Endothelial cell of umbilical vein (primary cell): ENCODE measurements at regions of chr5 and their contacts with region 1.

Region 1: DNA sequence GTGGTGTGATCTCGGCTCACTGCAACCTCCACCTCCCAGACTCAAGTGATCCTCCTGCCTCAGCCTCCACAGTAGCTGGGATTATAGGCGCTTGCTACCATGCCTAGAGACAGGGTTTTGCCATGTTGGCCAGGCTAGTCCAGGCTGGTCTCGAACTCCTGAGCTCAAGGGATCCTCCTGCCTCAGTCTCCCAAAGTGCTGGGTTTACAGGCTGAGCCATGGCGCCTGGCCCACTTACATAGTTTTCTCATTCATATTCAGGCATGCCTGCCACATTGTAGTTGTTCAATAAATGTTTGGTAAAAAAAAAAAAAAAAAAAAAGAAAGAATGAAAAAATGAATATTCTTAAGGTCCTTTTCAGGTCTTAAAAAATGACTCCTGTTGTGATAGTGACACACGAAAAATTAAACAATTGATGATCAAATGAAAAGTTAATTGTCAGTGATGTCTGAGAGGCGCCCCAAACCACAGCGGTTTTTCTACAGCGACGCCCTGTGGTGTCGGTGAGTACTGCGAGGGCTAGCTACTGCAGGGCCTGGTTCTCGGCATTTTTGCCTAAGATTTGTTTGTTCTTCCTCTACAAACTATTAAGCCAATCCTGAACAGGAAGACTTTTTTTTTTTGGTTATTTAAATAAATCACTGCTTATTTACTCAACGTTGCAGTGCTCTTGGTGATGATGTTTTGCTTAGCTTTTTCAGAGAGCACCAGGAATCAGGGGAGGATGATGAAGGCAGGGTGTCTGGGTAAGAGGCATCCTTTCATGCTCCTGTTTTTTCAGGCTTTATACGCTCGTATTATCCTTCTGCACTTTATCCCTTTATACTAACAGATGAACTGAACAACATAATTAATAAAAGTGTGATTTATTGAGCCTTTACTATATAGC is 67.0 kb upstream of the DPYSL3 start:
- DNase-seq: peak; percentile 45
- H3K4me3 ChIP-seq: no peak overlapping the region
- H3K27ac ChIP-seq: no peak overlapping the region
- H3K4me1 ChIP-seq: no peaks in the 10 kb centered on the region
- H3K27me3 ChIP-seq: no peaks in the 10 kb centered on the region
- CTCF ChIP-seq: peak; percentile 86 to 92
- POLR2A ChIP-seq: no peak

Region 2: DNA sequence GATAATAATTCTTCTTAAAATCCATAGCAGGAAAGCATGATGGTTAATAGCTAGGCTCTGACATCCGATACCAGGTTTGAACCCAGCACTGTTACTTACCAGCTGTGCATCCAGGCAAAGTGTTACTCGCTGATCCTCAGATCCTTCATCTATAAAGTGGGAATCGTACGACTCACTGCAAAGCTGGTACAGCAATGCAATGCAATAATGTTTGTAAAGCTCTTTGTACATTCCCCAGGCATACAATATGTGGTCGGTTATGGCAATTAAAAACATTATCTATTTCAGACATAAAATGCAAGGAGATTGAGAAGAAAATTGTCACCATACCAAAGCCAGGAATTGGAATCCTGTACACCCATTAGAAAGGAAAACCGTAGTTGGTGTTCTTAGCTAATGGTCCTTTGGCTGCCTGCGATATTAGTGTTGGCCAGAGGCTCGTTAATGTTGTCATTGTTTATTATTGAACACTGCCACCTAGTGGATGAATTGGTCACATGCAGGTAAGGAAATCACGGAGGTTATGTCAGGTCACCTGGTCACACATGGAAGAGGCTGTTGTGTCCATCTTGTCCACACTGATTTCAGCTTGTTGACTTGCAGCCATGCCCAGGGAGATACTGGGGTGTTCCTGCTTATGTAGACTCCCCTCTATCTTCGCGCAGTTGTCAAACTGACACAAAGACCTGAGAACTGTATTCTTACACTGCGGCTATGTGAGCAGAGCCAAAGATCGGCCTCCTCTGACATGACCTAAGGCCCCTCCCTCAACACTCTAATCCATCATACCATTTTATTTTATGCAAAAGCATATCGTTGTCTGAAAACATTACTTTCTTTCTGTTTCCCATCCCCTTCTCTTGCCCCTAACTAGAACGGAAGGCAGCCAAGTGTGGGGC is 610.9 kb before region 1 on chr5:
- CTCF ChIA-PET with region 1: interaction called, 6 read pairs
- POLR2A ChIA-PET with region 1: no interaction called
- dilution Hi-C with region 1: no loop called
- intact Hi-C with region 1: loop called (anchors 10 kb)
- DNase-seq: peak; percentile 74
- H3K4me3 ChIP-seq: no peak overlapping the region
- H3K27ac ChIP-seq: no peak overlapping the region
- H3K4me1 ChIP-seq: no peaks in the 10 kb centered on the region
- H3K27me3 ChIP-seq: no peaks in the 10 kb centered on the region
- CTCF ChIP-seq: peak; percentile 62 to 71
- POLR2A ChIP-seq: no peak

Region 3: DNA sequence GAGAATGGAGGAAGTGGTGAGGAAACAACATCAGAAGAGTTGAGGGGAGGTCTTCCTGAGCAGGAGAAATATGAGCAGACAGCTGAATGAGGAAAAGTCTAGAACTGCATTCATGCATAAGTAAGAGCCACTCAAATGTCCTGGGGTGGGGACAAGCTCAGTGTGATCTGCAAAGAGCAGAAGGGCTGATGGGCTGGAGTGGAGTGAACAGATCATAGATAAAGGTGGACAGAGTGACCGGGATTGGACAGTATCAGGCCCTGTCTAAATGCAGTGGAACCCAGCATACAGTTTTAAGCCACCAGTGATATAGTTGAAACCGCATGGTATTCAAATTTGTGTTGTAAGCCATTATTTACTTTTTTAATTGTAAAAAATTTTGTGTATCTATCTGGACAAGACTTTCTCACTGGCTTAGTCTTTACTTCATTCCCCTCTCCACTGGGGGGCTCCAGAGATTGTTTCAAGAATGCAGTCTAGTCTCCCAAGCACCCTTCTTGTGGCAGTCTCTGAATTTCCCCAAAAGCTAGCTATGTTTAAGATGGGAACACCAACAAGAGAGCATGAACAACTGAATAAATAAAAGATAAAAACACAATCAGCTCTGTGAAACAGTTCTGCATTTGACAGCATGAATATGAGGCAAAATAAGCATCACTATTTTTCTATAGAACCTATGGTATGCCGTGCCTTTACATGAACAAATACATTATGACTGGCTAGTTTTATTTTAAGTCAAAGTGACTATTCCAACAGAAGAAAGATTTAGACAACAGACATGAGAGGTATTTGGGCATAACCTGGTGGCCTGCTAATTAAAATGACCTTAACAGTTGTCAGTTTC is 352.7 kb before region 1 on chr5:
- CTCF ChIA-PET with region 1: interaction called, 51 read pairs
- POLR2A ChIA-PET with region 1: no interaction called
- dilution Hi-C with region 1: no loop called
- intact Hi-C with region 1: loop called (anchors 1 kb)
- DNase-seq: peak; percentile 60
- H3K4me3 ChIP-seq: no peak overlapping the region
- H3K27ac ChIP-seq: no peak overlapping the region
- H3K4me1 ChIP-seq: no peaks in the 10 kb centered on the region
- H3K27me3 ChIP-seq: peaks cover 4% of the 10 kb centered on the region in 2 experiments
- CTCF ChIP-seq: peak; percentile 44 to 64
- POLR2A ChIP-seq: no peak

Region 4: GRCh38 chr5:147403651-147404640 is 172.9 kb before region 1 on chr5:
- CTCF ChIA-PET with region 1: interaction called, 30 read pairs
- POLR2A ChIA-PET with region 1: no interaction called
- dilution Hi-C with region 1: no loop called
- intact Hi-C with region 1: no loop called
- DNase-seq: peak; percentile 96
- H3K4me3 ChIP-seq: no peak overlapping the region
- H3K27ac ChIP-seq: peak overlapping the region; percentile 95
- H3K4me1 ChIP-seq: peaks cover 25% of the 10 kb centered on the region
- H3K27me3 ChIP-seq: no peaks in the 10 kb centered on the region
- CTCF ChIP-seq: no peak
- POLR2A ChIP-seq: no peak

Region 5: GRCh38 chr5:147464211-147464610 is 112.7 kb before region 1 on chr5:
- CTCF ChIA-PET with region 1: interaction called, 67 read pairs
- POLR2A ChIA-PET with region 1: no interaction called
- dilution Hi-C with region 1: no loop called
- intact Hi-C with region 1: loop called (anchors 1 kb)
- DNase-seq: peak; percentile 81
- H3K4me3 ChIP-seq: no peak overlapping the region
- H3K27ac ChIP-seq: no peak overlapping the region
- H3K4me1 ChIP-seq: peaks cover 10% of the 10 kb centered on the region
- H3K27me3 ChIP-seq: no peaks in the 10 kb centered on the region
- CTCF ChIP-seq: peak; percentile 55 to 61
- POLR2A ChIP-seq: no peak

Region 6: GRCh38 chr5:147613359-147613758 is 36.5 kb after region 1 on chr5:
- CTCF ChIA-PET with region 1: no interaction called
- POLR2A ChIA-PET with region 1: no interaction called
- dilution Hi-C with region 1: no loop called
- intact Hi-C with region 1: no loop called
- DNase-seq: no peak
- H3K4me3 ChIP-seq: no peak overlapping the region
- H3K27ac ChIP-seq: no peak overlapping the region
- H3K4me1 ChIP-seq: no peaks in the 10 kb centered on the region
- H3K27me3 ChIP-seq: no peaks in the 10 kb centered on the region
- CTCF ChIP-seq: no peak
- POLR2A ChIP-seq: no peak

Region 7: GRCh38 chr5:147628058-147628895 is 51.4 kb after region 1 on chr5:
- CTCF ChIA-PET with region 1: interaction called, 13 read pairs
- POLR2A ChIA-PET with region 1: no interaction called
- dilution Hi-C with region 1: no loop called
- intact Hi-C with region 1: no loop called
- DNase-seq: peak; percentile 76
- H3K4me3 ChIP-seq: no peak overlapping the region
- H3K27ac ChIP-seq: no peak overlapping the region
- H3K4me1 ChIP-seq: no peaks in the 10 kb centered on the region
- H3K27me3 ChIP-seq: peaks cover 2% of the 10 kb centered on the region in 2 experiments
- CTCF ChIP-seq: peak; percentile 64 to 66
- POLR2A ChIP-seq: no peak